Posterior cingulate gyrus (tissue), 11 donors: ENCODE measurements at regions of chr6 and their contacts with region 1.

Region 1: DNA sequence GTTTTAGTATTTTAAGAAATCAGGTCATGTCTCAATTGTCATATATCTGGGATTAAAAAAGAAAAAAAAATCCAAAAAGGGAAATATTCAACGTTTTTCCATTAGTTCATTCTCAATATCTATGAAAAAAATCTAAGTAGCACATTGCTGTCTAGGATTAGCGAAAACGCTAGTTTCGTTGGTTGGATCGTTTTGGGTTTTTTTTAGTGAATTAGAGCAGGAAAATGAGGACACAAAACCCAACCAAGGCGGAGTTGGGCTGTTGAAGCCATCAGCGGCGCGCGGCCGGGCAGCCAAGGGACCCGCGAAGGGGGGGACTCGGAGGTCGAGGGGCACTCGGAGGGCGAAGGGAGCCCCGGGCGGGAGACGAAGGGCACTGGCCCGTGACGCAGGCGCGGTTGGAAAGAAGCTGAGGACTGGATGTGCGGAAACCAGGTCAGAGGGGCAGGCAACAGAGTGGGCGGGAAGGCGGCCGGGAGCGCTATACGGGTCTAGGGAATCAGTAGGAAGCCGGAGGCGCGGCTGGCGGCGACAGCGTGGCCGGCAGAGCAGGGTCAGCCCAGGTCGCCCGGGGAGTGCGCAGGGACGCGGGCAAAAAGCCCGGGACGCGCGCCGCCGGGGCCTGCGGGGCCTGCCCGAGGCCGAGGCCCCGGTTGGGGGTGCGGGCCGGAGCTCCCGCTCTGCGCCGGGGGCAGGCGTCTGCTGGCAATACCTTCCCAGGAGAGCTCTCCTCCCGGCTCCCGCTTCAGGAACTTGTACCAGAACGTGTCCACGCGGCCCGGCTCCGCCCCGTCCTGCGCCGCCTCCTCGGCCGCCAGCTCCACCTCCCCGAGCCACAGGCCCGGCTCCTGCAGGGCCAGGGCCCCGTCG is 599 bp downstream of the EPM2A start:
- DNase-seq: peak; percentile 75 to 97 (median 84)

Region 2: DNA sequence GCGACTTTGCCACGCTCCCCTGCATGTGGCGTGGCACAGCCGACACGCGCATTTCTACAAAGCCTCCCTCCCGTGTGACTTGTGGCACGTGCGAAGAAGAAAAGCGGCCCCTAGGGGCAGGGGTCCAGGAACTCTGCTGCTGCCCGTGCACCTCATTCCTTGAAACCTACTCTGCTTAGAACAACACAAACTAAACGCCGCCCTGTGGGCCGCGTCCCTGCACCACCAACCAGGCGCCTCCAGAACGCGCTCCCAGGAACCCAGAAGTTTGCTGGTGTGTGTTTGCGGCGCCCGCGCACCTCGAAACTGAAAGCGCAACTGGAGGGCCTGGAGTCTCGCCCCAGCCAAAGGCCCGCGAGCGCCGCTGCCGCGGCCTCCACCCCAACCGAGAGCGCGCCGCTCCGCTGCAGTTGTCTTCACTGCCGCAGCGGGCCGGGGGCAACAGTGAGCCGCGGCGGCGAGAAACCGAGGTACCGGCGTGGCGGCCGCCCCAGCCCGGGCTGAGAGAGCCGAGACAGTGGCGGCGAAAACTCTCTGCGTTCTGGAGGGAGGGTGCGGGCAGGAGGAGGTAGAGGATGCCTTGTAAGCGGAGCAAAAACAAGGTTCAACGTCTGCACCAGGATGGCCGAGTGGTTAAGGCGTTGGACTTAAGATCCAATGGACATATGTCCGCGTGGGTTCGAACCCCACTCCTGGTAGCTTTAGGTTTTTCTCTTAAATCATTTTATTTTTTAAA is 1518.6 kb before region 1 on chr6:
- intact Hi-C with region 1: loop called (anchors 10 kb)
- DNase-seq: peak; percentile 88 to 99 (median 92)

Region 3: GRCh38 chr6:145798530-145798929 is 63.8 kb after region 1 on chr6:
- intact Hi-C with region 1: no loop called
- DNase-seq: no peak

Region 4: GRCh38 chr6:145814501-145815308 is 80.0 kb after region 1 on chr6 and contains the start of gene FBXO30:
- intact Hi-C with region 1: loop called (anchors 1 kb)
- DNase-seq: peak; percentile 79 to 98 (median 86)